HEK293 (cell line): ENCODE measurements at regions of chr6 and their contacts with region 1.

Region 1: DNA sequence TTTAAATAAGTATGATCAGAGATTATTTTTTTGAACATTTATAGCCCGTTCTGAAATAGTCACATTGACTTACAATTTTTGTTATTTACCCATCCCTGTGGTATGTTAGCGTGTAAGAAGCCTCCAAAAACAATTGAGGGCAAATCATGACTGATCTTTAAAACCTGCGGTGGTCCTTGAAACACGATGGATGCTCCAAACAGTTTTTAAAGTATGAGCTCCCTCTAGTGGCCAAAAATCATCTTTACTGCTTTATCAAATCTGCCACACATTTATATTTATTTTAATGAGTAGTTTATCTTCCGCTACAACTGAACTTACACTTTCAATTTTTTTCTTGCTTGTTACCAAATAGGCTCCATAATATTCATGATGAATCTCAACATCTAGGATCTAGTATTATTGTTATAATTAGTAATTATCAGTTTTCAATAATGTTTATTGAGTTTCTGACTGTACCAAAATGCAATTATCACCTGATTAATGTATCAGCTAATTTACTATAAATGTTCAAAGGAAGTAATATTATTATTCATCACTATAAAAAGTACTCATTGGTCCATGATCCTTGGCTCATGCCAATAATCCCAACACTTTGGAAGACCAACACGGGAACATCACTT is 52.2 kb downstream of the MARCKS start:
- H3K4me3 ChIP-seq: no peak overlapping the region
- H3K27ac ChIP-seq: no peak overlapping the region
- H3K4me1 ChIP-seq: no peaks in the 10 kb centered on the region
- CTCF ChIP-seq: peak; percentile 16; the same call in 1 of the 2 replicates

Region 2: DNA sequence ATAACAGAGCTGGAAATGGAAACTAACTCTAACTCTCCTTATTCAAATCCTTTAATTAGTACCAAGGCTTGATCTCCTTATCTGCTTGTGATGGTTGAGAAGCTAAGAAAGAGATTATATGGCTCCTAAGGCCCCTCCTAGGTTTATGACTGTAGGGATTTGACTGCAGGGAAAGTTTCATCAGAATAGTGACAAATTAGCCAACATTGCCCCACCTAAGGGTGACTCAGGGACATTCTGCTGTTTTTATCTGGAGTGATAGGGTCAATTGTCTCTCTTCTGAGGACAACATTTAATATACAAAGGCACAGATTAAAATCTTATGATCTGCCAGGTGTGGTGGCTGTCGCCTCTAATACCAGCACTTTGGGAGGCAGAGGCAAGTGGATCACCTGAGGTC is 190.3 kb before region 1 on chr6:
- CTCF ChIA-PET with region 1: no interaction called
- POLR2A ChIA-PET with region 1: no interaction called
- H3K4me3 ChIP-seq: no peak overlapping the region
- H3K27ac ChIP-seq: no peak overlapping the region
- H3K4me1 ChIP-seq: no peaks in the 10 kb centered on the region
- CTCF ChIP-seq: no peak

Region 3: GRCh38 chr6:113888493-113888892 is 20.9 kb before region 1 on chr6:
- CTCF ChIA-PET with region 1: interaction called, 12 read pairs
- POLR2A ChIA-PET with region 1: no interaction called
- H3K4me3 ChIP-seq: no peak overlapping the region
- H3K27ac ChIP-seq: no peak overlapping the region
- H3K4me1 ChIP-seq: no peaks in the 10 kb centered on the region
- CTCF ChIP-seq: no peak

Region 4: GRCh38 chr6:113920663-113921267 is 11.4 kb after region 1 on chr6:
- CTCF ChIA-PET with region 1: interaction called, 15 read pairs
- POLR2A ChIA-PET with region 1: no interaction called
- H3K4me3 ChIP-seq: no peak overlapping the region
- H3K27ac ChIP-seq: no peak overlapping the region
- H3K4me1 ChIP-seq: no peaks in the 10 kb centered on the region
- CTCF ChIP-seq: no peak